ENCODE measurements at regions of chr2 and their contacts with region 1.

Region 1: DNA sequence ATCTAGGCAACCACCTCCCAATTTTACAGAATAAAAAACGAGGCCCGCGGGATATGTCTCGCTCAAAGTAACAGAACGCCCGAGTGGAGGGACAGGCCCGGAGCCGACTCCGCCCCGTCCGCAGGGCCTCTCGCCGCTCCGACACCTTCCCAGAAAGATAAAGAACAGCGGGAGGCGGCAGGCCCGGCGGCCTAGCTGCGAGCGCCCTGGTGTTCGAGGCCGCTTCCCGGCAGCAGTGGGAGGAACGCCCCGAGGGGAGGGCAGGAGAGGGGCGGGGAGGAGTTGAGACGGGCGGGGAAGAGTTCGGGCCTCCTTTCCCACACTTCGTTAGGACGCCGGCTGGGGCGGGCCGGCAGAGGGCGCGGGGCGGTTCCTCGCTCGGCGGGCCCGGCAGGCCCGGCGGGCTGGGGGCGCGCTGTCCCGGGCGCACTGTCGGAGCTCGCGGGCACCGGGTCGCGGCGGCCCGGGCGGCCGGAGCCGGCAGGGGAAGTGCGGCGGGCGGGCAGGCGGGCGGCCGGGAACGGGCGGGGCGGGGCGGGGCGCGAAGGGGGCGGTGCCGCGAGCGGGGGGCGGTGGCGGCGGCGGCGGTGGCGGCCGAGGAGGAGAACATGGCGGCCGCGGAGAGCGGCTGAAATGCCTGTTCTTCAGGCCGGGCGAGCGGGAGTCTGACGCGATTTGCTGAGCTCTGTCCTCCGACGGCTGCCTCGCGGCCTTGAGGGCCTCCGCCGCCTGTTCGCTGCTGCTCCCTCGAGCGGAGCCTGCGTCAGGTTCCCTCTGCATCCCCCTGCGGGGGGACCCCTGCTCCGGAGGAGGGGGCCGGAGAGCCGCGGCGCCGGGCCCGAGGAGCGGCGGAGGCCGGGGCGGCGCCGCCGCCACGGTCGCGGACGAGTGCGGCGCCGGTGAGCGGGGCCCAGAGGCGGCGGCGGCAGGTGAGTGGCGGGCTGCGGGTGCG is at the start of gene NCOA1:
- DNase-seq: peak; percentile 86
- H3K4me3 ChIP-seq: peak within 1 kb of the TSS; percentile 81 to 92
- H3K27ac ChIP-seq: peak within 1 kb of the TSS; percentile 78 to 81
- H3K4me1 ChIP-seq: no peaks in the 10 kb centered on the region
- H3K27me3 ChIP-seq: no peaks in the 10 kb centered on the region
- CTCF ChIP-seq: peak in 1 of 4 experiments; percentile 18
- POLR2A ChIP-seq: peak; percentile 25
- total RNA-seq, gene NCOA1: 24.9 to 72.4 TPM

Region 2: GRCh38 chr2:24421668-24422067 is 69.3 kb before region 1 on chr2:
- intact Hi-C with region 1: loop called (anchors 10 kb)
- DNase-seq: peak; percentile 36
- H3K4me3 ChIP-seq: no peak overlapping the region
- H3K27ac ChIP-seq: no peak overlapping the region
- H3K4me1 ChIP-seq: no peaks in the 10 kb centered on the region
- H3K27me3 ChIP-seq: no peaks in the 10 kb centered on the region
- CTCF ChIP-seq: peak in 3 of 4 experiments; percentile 36 to 46 (median 45)
- POLR2A ChIP-seq: no peak

Region 3: GRCh38 chr2:24739354-24740025 is 248.5 kb after region 1 on chr2:
- intact Hi-C with region 1: no loop called
- DNase-seq: no peak
- H3K4me3 ChIP-seq: no peak overlapping the region
- H3K27ac ChIP-seq: no peak overlapping the region
- H3K4me1 ChIP-seq: no peaks in the 10 kb centered on the region
- H3K27me3 ChIP-seq: no peaks in the 10 kb centered on the region
- CTCF ChIP-seq: no peak
- POLR2A ChIP-seq: no peak

Region 4: DNA sequence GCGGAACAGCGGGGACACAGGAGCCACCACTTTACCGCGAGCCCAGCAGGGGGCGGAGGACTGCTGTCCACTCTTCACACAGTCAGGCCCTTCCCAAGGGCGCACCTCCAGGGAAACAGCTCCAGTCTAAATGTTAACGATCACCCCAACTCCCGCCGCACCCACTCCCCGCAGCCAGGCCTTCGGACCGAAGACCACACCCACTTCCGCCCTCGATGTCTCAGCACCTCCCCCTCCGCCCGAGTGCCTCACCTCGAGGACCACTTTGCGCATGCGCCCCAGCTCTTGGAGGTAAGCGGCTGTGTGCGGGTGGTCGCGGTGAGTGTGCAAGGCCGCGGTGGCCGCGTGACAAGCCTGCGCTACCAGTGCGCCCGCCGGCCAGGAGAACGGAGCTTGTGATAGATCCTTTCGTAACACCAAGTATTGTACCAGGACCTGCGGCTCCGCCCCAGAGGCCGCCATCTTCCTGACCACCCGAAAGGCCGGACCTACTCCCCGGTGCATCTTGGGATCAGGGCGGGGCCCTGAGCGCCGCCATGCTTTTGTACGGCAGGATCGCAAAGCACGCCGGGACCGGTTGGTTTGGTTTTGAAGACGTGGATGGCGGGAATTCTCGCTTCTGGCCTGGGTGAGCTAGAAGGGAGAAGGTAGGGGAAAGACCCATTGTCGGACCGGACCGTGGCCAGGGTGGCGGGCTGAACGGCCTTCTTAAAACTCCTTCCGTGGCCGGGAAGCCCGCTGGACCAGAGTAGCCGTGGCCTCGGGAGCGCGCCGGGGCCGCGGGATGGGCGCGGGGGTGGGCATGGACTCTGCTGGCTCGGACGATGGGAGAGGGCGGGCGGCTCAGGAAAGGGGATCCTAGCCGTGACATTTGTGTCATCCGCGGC is 302.2 kb after region 1 on chr2 and contains the starts of genes CENPO and PTRHD1:
- intact Hi-C with region 1: loop called (anchors 10 kb)
- DNase-seq: peak; percentile 96
- H3K4me3 ChIP-seq: peak within 1 kb of the TSS; percentile 67 to 76
- H3K27ac ChIP-seq: peak within 1 kb of the TSS; percentile 96 to 99
- H3K4me1 ChIP-seq: no peaks in the 10 kb centered on the region
- H3K27me3 ChIP-seq: no peaks in the 10 kb centered on the region
- CTCF ChIP-seq: peak; percentile 19 to 72 (median 66)
- POLR2A ChIP-seq: peak; percentile 32
- total RNA-seq, gene CENPO: 9.1 to 24.4 TPM
- total RNA-seq, gene PTRHD1: 33.9 to 38.6 TPM

Measured in prostate gland (tissue), 2 donors.